Heart right ventricle (tissue), 16 donors: ENCODE measurements at regions of chr10 and their contacts with region 1.

Region 1: GRCh38 chr10:71319042-71319799 is at the start of gene SLC29A3:
- DNase-seq: peak; percentile 74 to 85
- ATAC-seq: peak; percentile 89 to 95 (median 92)
- H3K4me3 ChIP-seq: peak within 1 kb of the TSS; percentile 54 to 84 (median 68)
- H3K27ac ChIP-seq: peak within 1 kb of the TSS in 9 of 10 donors; percentile 17 to 86 (median 68)
- H3K4me1 ChIP-seq: peaks cover 3 to 33% (median 12%) of the 10 kb centered on the region in 9 donors
- H3K27me3 ChIP-seq: no peaks in the 10 kb centered on the region
- CTCF ChIP-seq: peak; percentile 34 to 74 (median 55)
- total RNA-seq, gene SLC29A3: 0.89 to 3.5 (median 1.2) TPM

Region 2: DNA sequence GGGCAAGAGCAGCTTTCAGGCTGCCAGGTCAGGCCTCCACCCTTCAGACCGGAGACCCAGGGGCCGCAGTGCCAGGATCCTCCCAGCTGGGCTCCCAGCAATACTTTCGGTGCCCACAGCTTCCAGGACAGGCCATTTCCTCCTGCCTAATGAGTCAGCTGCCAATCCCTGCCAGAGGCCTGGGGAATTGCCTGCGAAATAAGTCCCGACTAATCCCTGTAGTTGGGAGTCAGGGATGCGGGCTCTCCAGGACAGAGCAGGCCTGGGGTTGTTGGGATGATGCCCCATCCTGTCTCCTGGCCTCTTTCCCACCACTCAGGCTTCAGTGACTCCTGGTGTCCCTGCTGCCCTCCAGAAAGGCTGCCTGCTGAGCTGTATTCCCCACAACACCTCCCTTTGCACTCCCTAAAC is 250.4 kb before region 1 on chr10:
- intact Hi-C with region 1: no loop called
- DNase-seq: peak; percentile 64 to 67
- ATAC-seq: peak; percentile 69 to 86 (median 78)
- H3K4me3 ChIP-seq: no peak overlapping the region
- H3K27ac ChIP-seq: peak overlapping the region; percentile 29 to 84 (median 79)
- H3K4me1 ChIP-seq: peaks cover 0 to 52% (median 18%) of the 10 kb centered on the region in 9 donors
- H3K27me3 ChIP-seq: peaks cover 0 to 3% (median 0%) of the 10 kb centered on the region in 7 donors
- CTCF ChIP-seq: no peak

Region 3: GRCh38 chr10:71383972-71384687 is 64.9 kb after region 1 on chr10:
- intact Hi-C with region 1: loop called in 4 of 10 experiments (anchors 5 to 10 kb)
- DNase-seq: peak; percentile 69 to 79
- ATAC-seq: peak; percentile 56 to 95 (median 91)
- H3K4me3 ChIP-seq: no peak overlapping the region
- H3K27ac ChIP-seq: no peak overlapping the region
- H3K4me1 ChIP-seq: peaks cover 0 to 4% (median 0%) of the 10 kb centered on the region in 9 donors
- H3K27me3 ChIP-seq: no peaks in the 10 kb centered on the region
- CTCF ChIP-seq: peak; percentile 71 to 95 (median 90)

Region 4: DNA sequence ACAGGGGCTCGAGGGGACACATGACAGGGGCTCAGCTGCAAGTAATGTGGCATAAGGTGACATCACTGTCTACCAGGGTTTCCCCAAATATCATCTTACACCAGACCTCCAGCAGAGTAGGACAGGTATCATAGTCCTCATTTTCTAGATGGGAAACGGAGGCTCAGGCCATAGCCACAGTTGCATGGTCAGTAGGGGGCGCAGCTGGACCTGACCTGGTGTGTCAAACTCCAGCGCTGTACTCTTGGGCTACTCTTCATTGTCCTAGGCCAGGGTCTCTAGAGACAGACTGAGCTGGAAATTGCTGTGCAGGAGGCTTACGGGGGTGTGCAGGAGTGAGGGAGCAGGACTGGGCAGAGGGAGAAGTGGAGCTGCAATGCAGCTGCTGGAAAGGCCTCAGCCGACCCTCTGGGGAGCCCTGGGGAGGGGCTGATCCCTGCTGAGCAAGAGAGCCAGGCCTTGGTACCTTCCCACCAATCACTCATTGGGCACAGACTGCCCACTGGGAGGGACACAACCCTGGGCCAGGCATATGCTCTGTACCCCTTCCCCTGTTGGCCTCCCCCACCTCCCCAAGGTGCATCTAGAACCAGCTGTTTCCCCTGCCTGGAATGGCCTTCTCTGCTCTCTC is 167.4 kb after region 1 on chr10:
- intact Hi-C with region 1: loop called in 1 of 10 experiments (anchors 10 kb)
- DNase-seq: peak in 1 of 2 donors; percentile 54
- ATAC-seq: peak in 7 of 8 donors; percentile 42 to 68 (median 55)
- H3K4me3 ChIP-seq: no peak overlapping the region
- H3K27ac ChIP-seq: no peak overlapping the region
- H3K4me1 ChIP-seq: peaks cover 0 to 9% (median 7%) of the 10 kb centered on the region in 9 donors
- H3K27me3 ChIP-seq: no peaks in the 10 kb centered on the region
- CTCF ChIP-seq: peak; percentile 21 to 67 (median 55)

Region 5: DNA sequence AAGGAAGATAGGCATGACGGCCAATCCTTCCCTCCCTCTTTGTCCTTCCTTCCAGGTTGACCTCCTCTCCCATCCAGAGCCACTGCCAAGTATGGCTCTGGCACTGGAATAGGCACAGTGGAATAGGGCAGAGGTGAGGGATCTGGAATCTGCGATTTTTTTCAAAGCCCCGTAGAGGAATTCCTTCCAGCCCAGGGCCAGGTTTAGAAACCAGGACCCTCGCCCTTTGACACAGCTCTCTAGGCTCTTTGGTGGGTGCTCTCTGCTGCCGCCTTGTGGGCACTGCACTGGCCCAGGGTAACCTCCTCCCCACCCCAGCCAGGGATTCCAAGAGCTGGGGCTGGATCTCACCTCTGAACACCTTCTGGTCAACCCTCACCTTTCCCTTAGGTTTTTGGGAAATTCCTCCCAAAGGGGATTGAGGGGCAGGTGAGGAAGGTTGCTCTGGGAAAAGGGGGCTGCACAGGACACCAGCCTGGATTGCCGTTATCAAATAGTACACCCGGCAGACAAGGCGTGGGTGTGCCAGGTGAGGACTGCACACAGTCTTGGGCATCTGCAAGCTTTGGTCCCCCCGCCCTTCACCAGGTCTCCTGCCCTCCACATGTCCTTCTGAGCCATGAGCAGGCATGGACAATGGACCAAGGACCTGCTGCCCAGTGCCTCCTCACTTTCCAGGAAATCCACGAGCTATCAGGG is 377.6 kb after region 1 on chr10:
- intact Hi-C with region 1: loop called in 3 of 10 experiments (anchors 5 to 10 kb)
- DNase-seq: peak; percentile 61 to 78
- ATAC-seq: peak; percentile 47 to 73 (median 70)
- H3K4me3 ChIP-seq: no peak overlapping the region
- H3K27ac ChIP-seq: peak overlapping the region in 2 of 10 donors; percentile 16 to 87
- H3K4me1 ChIP-seq: peaks cover 0 to 67% (median 57%) of the 10 kb centered on the region in 9 donors
- H3K27me3 ChIP-seq: no peaks in the 10 kb centered on the region
- CTCF ChIP-seq: peak; percentile 75 to 90 (median 84)

Region 6: GRCh38 chr10:71893920-71894319 is 574.7 kb after region 1 on chr10:
- intact Hi-C with region 1: loop called in 4 of 10 experiments (anchors 5 to 10 kb)
- DNase-seq: no peak
- ATAC-seq: no peak
- H3K4me3 ChIP-seq: no peak overlapping the region
- H3K27ac ChIP-seq: no peak overlapping the region
- H3K4me1 ChIP-seq: peaks cover 0 to 49% (median 8%) of the 10 kb centered on the region in 9 donors
- H3K27me3 ChIP-seq: no peaks in the 10 kb centered on the region
- CTCF ChIP-seq: no peak